Dendritic cell treated with granulocyte-macrophage colony-stimulating factor and Interleukin-4, amounts not matched to agents 40 ng/mL and 50 ng/mL, for 4 days (primary cell): ENCODE measurements at regions of chr17 and their contacts with region 1.

Region 1: DNA sequence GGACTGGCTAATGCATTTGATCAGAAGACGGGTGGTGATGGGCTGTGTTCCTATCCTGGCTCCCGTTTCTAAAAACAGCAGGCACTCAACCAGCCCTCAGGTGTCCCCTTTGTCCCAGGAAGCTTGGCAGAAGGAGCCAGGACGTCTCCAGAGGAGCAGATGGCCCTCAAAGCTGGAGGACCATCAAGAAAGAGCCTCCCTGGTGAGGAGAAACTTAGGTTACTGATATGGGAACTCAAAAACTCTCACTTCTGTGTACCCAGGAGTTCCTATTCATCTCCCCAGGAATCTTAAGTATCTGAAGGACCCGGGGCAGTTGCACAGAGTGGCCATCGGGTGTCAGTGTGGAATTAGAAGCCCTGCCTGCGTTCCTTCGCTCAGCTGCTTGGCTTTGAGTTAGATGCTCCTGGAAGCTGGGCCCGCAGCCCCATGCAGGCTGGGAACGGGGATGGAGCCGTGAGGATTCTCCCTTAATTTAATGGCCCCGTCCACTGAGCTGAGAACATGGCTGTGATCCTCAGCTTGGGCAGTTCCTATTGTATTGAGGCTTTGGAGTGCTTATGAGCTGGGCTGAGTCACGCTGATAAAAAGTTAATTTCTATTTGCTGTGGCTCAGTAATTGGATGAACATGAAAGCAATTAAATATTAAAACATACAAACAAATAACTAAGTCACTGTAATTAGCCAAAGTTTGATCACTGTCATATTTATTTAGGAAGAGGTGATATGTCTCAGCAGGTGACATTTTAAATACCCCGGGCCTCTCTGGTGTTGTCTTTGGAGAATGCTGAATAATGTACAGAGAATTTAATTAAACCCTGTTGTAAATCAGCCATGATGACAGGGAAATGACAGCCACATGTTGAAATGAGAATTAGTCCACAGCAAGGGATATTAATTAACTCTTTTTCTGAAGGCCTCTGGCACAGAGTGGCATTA is 402.1 kb downstream of the SEC14L1 start:
- H3K4me3 Mint-ChIP-seq: no peak overlapping the region
- H3K27ac Mint-ChIP-seq: no peak overlapping the region
- H3K4me1 Mint-ChIP-seq: peaks cover 18% of the 10 kb centered on the region
- H3K27me3 Mint-ChIP-seq: peaks cover 59% of the 10 kb centered on the region

Region 2: DNA sequence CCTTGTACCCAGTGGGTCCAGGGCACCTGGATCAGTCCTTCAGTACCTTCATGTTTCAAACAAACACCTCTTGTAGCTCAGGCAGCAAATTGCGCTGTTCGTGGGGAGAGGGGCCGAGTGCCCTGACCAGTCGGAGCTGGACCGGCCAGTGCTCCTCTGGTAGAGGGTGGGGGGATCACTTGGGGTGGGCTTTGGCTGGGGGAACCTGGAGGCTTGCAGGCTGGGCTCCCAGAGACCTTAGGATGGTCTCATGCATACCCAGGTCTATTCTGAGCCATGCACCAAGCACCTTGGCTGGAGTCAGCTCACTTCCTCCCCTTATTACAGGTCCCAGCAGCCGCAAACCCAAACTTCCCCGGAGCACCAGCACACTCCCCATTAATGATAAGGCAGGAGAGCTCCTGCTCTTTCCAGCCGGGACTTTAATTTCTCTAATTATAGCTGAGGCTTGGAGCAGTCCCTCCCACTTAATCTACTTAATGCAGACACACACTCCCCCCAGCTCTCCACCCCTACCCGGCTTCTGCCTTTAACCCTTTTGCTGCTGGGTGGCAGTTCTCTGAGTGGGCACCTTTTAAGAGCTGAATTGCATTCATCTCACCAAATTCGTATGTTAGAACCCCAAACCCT is 700.9 kb before region 1 on chr17:
- intact Hi-C with region 1: no loop called
- H3K4me3 Mint-ChIP-seq: no peak overlapping the region
- H3K27ac Mint-ChIP-seq: no peak overlapping the region
- H3K4me1 Mint-ChIP-seq: peaks cover 17% of the 10 kb centered on the region
- H3K27me3 Mint-ChIP-seq: peaks cover 41% of the 10 kb centered on the region

Region 3: DNA sequence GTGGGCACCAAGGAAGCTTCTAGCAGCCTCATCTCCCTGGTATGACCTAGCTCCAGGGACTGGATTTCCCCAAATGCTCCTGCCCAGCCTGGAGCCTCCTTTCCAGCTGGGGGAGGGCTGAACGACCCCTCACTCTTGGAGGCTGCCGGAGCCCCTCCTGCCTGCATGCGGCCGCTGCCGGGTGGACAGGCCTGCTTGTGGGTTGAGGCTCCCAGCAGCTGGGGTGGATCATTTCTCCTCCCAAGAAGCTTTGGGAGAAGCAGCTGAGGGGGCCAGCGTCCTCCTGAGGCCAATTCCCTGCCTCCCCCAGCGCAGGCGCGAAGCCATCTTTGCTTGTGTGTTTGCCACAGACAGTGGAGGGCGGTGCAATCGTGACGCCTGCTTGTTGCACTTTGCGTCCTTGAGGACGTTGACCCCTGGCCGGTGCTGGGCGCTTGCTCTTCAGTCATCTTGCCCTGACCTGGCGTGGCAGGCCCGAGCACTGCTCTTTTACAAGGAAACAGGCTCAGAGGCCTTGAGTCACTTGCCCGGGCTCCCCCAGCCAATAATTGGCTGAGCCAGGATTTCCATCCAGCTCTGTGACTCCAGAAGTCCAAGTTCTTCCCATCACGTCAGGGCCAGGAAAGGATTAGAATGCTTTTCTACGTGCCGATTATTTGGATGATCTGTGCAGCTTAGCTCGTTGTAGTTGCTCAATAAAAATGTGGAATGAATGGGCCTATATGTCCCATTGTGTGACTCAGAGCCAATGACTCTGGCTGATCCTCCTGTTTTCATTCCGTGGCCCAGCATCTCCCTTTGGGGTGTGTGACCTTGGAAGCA is 188.2 kb before region 1 on chr17:
- intact Hi-C with region 1: no loop called
- H3K4me3 Mint-ChIP-seq: no peak overlapping the region
- H3K27ac Mint-ChIP-seq: no peak overlapping the region
- H3K4me1 Mint-ChIP-seq: peaks cover 75% of the 10 kb centered on the region
- H3K27me3 Mint-ChIP-seq: no peaks in the 10 kb centered on the region

Region 4: DNA sequence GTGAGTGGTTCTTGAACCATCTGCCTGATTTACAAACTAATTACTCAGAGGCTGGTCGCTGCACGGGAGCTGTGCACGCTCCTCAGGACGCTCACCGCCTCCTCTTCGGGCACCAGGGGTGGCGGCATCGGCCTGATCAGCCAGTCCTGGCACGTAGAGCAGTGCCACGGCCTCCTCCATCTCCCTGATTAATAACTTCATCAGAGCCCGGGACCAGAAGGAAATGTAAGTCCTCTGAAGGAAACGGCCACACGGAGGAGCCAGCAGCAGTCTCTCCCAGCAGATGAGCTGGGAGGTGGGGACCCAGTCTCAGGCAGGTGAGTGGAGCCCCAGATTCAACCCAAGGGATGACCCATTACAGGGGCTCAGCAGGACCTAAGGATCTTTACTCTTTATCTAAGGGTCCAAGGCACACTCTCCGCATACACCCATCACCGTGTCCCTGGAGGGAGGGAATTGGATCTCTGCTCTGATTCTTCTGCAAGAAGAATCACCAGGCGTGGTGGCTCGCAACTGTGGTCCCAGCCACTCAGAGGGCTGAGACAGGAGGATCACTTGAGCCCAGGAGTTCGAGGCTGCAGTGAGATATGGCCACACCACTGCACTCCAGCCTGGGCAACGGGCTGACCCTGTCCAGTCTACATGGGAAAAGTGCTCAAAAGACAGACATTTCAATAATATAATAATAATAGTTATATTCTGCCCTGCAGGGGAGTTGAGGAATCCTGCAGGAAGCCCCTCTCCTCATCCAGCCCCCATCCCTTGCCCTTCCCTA is 35.5 kb before region 1 on chr17:
- intact Hi-C with region 1: no loop called
- H3K4me3 Mint-ChIP-seq: no peak overlapping the region
- H3K27ac Mint-ChIP-seq: no peak overlapping the region
- H3K4me1 Mint-ChIP-seq: no peaks in the 10 kb centered on the region
- H3K27me3 Mint-ChIP-seq: peaks cover 3% of the 10 kb centered on the region

Region 5: GRCh38 chr17:77555741-77556291 is 13.0 kb after region 1 on chr17:
- intact Hi-C with region 1: no loop called
- H3K4me3 Mint-ChIP-seq: no peak overlapping the region
- H3K27ac Mint-ChIP-seq: no peak overlapping the region
- H3K4me1 Mint-ChIP-seq: no peaks in the 10 kb centered on the region
- H3K27me3 Mint-ChIP-seq: peaks cover 64% of the 10 kb centered on the region

Region 6: GRCh38 chr17:77606865-77607210 is 64.0 kb after region 1 on chr17:
- intact Hi-C with region 1: loop called (anchors 2 kb)
- H3K4me3 Mint-ChIP-seq: no peak overlapping the region
- H3K27ac Mint-ChIP-seq: no peak overlapping the region
- H3K4me1 Mint-ChIP-seq: peaks cover 36% of the 10 kb centered on the region
- H3K27me3 Mint-ChIP-seq: peaks cover 45% of the 10 kb centered on the region

Region 7: DNA sequence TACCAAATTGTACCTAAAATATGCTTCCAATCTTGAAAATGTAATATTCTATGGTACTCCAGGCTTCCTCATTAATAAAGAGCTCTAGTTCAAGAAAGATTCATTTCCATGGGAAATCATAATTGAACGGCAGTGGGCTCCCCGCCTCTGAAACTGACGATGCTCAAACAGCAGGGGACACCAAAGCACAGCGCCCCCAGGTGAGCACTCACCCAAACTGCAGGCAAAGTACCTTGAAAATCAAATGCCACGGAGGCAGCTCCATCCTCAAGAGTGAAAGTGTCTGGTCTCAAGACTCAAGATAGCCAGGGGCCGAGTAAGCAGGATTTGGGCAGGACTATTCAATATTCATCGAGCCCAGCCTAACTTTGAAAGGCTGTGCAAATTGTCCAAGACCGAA is 198.3 kb after region 1 on chr17:
- intact Hi-C with region 1: loop called (anchors 2 kb)
- H3K4me3 Mint-ChIP-seq: no peak overlapping the region
- H3K27ac Mint-ChIP-seq: no peak overlapping the region
- H3K4me1 Mint-ChIP-seq: no peaks in the 10 kb centered on the region
- H3K27me3 Mint-ChIP-seq: peaks cover 24% of the 10 kb centered on the region

Region 8: DNA sequence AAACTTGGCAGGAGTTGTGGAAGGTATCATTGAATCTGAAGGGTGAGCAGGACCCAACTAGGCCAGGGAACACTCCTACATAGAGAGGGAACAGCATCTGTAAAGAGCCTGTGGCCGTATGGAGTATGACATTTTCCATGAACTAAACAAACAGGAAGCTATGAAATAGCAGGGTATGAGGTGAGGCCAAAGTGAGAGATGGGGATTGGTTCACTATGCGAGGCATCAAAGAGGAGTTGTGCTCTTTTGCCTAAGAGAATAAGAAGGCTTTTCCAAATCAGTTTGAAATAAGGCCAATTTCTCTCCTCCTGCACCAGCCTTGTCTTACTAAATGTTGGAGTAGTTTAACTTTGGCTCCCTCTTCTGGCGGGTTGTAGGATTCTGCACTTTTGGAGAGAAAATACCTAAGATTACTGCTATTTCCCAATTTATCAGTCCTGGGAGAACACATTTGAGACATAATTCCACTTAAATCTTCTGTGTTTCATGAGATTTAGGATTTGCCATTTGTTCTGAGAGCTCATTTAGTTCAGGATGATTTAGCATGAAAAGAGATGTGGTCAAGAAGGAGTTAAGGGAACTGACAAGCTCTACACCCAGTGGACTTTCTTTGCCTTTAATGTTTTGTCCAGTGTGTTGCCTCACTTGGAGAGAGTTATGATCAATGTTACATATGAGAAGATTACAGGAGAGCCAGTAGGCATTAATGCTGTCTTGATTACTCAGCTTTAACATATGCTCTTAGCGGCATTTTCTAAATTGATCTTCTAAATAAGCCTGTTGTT is 471.1 kb after region 1 on chr17:
- intact Hi-C with region 1: loop called (anchors 2 kb)
- H3K4me3 Mint-ChIP-seq: no peak overlapping the region
- H3K27ac Mint-ChIP-seq: no peak overlapping the region
- H3K4me1 Mint-ChIP-seq: peaks cover 7% of the 10 kb centered on the region
- H3K27me3 Mint-ChIP-seq: no peaks in the 10 kb centered on the region